B cell (primary cell): ENCODE measurements at regions of chr20 and their contacts with region 1.

Region 1: DNA sequence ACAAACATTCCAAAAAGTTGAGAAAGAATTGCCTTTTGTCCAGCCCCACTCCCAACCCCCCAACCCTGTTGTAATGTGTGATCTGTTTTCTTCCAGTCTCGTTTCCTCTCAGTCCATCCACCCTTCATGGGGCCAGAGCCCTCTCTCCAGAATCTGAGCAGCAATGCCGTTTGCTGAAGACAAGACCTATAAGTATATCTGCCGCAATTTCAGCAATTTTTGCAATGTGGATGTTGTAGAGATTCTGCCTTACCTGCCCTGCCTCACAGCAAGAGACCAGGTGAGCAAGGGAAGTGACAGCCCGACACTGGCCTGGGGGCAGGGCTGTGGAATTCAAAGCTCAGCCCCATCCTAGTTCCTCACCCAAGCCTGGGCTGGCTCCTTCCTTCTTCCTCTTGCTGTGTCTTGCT is 7.8 kb downstream of the MAVS start:
- DNase-seq: no peak
- ATAC-seq: no peak
- H3K4me3 ChIP-seq: no peak overlapping the region
- H3K4me3 Mint-ChIP-seq: no peak overlapping the region
- H3K27ac ChIP-seq: no peak overlapping the region
- H3K27ac Mint-ChIP-seq: peak overlapping the region; percentile 26
- H3K4me1 ChIP-seq: no peaks in the 10 kb centered on the region
- H3K4me1 Mint-ChIP-seq: peaks cover 6% of the 10 kb centered on the region
- H3K27me3 ChIP-seq: no peaks in the 10 kb centered on the region
- H3K27me3 Mint-ChIP-seq: no peaks in the 10 kb centered on the region
- CTCF ChIP-seq: no peak

Region 2: DNA sequence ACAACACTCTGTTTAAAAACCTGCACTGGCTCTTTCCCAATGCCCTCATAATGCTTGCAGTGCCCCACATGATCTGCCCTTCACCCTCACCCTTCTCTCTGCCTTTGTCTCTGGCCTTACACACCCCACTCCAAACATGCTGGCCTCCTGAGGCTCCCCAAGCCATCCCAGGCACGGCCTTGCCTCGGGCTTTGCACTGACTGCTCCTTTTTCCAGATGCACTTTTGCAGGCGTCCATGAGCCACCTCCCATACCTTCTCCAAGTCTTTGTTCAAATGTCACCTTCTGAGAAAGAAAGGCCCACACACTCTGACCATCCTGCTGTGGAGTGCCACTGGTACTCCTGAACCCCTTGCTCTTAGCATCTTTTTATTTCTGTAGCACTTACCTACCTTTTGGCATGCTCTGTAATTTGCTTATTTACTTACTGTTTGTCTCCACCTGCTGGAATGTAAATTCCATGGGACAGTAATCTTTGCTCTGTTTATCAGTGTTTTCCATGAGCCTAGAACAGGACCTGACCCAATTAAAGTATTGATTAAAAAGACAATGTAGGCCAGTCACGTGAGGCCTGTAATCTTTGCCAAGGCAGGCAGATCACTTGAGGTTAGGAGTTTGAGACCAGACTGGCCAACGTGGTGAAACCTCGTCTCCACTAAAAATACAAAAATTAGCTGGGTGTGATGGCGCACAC is 222.0 kb before region 1 on chr20:
- CTCF ChIA-PET with region 1: no interaction called
- POLR2A ChIA-PET with region 1: no interaction called
- intact Hi-C with region 1: no loop called
- DNase-seq: no peak
- ATAC-seq: no peak
- H3K4me3 ChIP-seq: no peak overlapping the region
- H3K4me3 Mint-ChIP-seq: no peak overlapping the region
- H3K27ac ChIP-seq: no peak overlapping the region
- H3K27ac Mint-ChIP-seq: no peak overlapping the region
- H3K4me1 ChIP-seq: no peaks in the 10 kb centered on the region
- H3K4me1 Mint-ChIP-seq: no peaks in the 10 kb centered on the region
- H3K27me3 ChIP-seq: no peaks in the 10 kb centered on the region
- H3K27me3 Mint-ChIP-seq: no peaks in the 10 kb centered on the region
- CTCF ChIP-seq: no peak

Region 3: DNA sequence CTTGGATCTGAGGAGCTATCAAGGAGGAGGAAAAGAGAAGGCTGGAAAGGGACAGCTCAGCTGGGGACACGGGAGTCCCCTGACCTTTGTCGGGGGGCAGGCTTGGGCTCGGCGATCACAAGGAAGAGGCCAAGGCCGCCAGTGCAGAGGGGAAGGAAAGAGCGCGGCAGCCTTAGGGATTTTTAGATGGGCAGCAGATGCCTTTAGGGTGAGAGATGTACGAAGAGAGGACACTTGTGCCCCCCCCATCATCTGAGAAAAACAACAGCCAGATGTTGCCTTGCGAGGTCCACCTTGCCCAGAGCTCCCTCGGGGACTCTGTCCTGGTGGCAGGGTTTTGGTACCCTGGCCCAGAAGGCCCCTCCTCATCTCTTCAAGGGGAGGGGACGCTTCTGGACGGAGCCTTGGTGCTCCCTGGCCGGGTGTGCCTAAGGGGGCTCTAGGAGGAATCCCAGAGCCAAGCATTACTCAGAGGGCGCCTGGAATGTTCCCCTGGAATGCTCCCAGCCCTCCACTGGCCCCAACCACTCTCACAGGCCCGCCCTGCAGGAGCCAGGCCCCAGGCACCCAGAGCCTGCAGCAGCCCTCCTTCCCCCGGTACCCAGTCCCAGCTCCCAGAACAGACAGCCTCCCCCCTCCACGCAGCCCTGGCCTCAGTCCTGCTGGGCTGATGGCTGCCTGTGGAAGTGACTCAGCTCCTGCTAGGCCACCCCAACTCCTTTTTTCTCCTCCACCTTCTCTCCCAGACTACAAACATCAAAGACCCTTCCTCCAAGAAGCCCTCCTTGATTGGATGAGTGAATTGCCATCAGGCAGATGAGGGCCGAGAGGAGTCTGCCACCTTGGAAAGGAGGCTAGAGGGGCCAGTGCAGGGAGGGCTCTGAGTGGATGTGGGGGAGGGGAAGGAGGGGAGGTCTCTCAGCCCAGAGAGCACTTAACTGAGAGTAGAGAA is 174.4 kb before region 1 on chr20:
- CTCF ChIA-PET with region 1: interaction called, 16 read pairs
- POLR2A ChIA-PET with region 1: no interaction called
- intact Hi-C with region 1: no loop called
- DNase-seq: no peak
- ATAC-seq: no peak
- H3K4me3 ChIP-seq: no peak overlapping the region
- H3K4me3 Mint-ChIP-seq: no peak overlapping the region
- H3K27ac ChIP-seq: no peak overlapping the region
- H3K27ac Mint-ChIP-seq: no peak overlapping the region
- H3K4me1 ChIP-seq: peaks cover 0 to 7% of the 10 kb centered on the region in 2 donors
- H3K4me1 Mint-ChIP-seq: peaks cover 4% of the 10 kb centered on the region
- H3K27me3 ChIP-seq: peaks cover 0 to 38% (median 6%) of the 10 kb centered on the region in 4 experiments
- H3K27me3 Mint-ChIP-seq: peaks cover 57% of the 10 kb centered on the region
- CTCF ChIP-seq: no peak

Region 4: DNA sequence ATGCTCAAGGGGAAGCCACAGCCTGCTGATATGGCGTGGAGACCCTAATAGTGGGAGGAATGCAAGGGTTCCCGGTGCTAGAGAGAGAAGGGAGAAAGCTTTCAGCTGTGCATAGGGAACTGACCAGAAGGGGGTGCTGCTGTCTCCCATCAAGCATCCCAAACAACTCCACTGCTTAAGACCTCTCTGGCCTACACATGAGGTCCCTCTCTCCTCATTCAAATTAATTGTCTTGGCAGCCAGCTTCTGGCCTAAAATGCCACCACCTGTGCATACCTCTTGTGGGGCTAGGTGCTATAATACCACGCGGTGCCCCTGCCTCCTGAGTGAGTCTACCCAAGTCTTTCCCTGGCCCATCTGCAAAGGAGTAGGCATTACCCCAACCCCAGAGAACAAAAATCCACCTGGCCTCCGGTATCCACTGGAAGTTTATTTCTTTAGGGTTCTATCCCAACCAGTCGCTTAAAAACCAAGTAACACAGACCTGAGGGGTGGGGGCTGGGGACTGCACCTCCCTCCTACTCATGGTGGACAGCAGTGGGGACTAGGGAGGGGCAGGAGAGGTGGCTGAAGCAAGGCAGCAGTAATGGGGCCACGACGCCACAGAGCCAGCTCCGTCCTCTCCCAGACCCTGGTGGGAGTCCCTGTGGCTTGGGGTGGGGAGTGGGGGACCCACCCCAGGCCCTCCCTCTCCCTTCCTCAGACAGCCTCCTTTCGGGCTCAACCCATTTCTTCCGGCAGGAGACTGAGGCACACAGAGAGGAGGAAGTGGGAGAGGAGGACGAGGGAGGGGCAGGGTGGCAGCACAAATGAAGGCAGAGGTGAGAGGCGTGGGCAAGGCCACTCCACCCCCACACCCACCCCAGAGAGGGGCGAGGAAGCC is 101.1 kb before region 1 on chr20:
- CTCF ChIA-PET with region 1: interaction called, 10 read pairs
- POLR2A ChIA-PET with region 1: interaction called, 4 read pairs
- intact Hi-C with region 1: loop called (anchors 1 kb)
- DNase-seq: peak; percentile 72
- ATAC-seq: peak; percentile 59
- H3K4me3 ChIP-seq: no peak overlapping the region
- H3K4me3 Mint-ChIP-seq: peak overlapping the region; percentile 37
- H3K27ac ChIP-seq: no peak overlapping the region
- H3K27ac Mint-ChIP-seq: peak overlapping the region; percentile 67
- H3K4me1 ChIP-seq: peaks cover 0 to 12% of the 10 kb centered on the region in 2 donors
- H3K4me1 Mint-ChIP-seq: peaks cover 7% of the 10 kb centered on the region
- H3K27me3 ChIP-seq: no peaks in the 10 kb centered on the region
- H3K27me3 Mint-ChIP-seq: no peaks in the 10 kb centered on the region
- CTCF ChIP-seq: peak; percentile 75

Region 5: GRCh38 chr20:3786665-3787323 is 67.7 kb before region 1 on chr20 and contains the start of gene CENPB:
- CTCF ChIA-PET with region 1: interaction called, 47 read pairs
- POLR2A ChIA-PET with region 1: no interaction called
- intact Hi-C with region 1: loop called (anchors 1 kb)
- DNase-seq: peak; percentile 91
- ATAC-seq: peak; percentile 96
- H3K4me3 ChIP-seq: peak within 1 kb of the TSS; percentile 46 to 62 (median 59)
- H3K4me3 Mint-ChIP-seq: peak within 1 kb of the TSS; percentile 89
- H3K27ac ChIP-seq: peak within 1 kb of the TSS; percentile 16 to 56
- H3K27ac Mint-ChIP-seq: peak within 1 kb of the TSS; percentile 88
- H3K4me1 ChIP-seq: peaks cover 8 to 18% of the 10 kb centered on the region in 2 donors
- H3K4me1 Mint-ChIP-seq: peaks cover 30% of the 10 kb centered on the region
- H3K27me3 ChIP-seq: no peaks in the 10 kb centered on the region
- H3K27me3 Mint-ChIP-seq: no peaks in the 10 kb centered on the region
- CTCF ChIP-seq: peak; percentile 88
- total RNA-seq, gene CENPB: 43.7 and 46.4 TPM in 2 replicates

Region 6: GRCh38 chr20:3795511-3796468 is 58.7 kb before region 1 on chr20 and contains the start of gene CDC25B:
- CTCF ChIA-PET with region 1: interaction called, 13 read pairs
- POLR2A ChIA-PET with region 1: no interaction called
- intact Hi-C with region 1: no loop called
- DNase-seq: peak; percentile 89
- ATAC-seq: peak; percentile 76
- H3K4me3 ChIP-seq: peak within 1 kb of the TSS; percentile 64 to 100 (median 90)
- H3K4me3 Mint-ChIP-seq: peak within 1 kb of the TSS; percentile 97
- H3K27ac ChIP-seq: peak within 1 kb of the TSS; percentile 93 to 97
- H3K27ac Mint-ChIP-seq: peak within 1 kb of the TSS; percentile 98
- H3K4me1 ChIP-seq: peaks cover 47 to 52% of the 10 kb centered on the region in 2 donors
- H3K4me1 Mint-ChIP-seq: peaks cover 49% of the 10 kb centered on the region
- H3K27me3 ChIP-seq: no peaks in the 10 kb centered on the region
- H3K27me3 Mint-ChIP-seq: no peaks in the 10 kb centered on the region
- CTCF ChIP-seq: peak; percentile 39
- total RNA-seq, gene CDC25B: 72.3 and 77.3 TPM in 2 replicates

Region 7: DNA sequence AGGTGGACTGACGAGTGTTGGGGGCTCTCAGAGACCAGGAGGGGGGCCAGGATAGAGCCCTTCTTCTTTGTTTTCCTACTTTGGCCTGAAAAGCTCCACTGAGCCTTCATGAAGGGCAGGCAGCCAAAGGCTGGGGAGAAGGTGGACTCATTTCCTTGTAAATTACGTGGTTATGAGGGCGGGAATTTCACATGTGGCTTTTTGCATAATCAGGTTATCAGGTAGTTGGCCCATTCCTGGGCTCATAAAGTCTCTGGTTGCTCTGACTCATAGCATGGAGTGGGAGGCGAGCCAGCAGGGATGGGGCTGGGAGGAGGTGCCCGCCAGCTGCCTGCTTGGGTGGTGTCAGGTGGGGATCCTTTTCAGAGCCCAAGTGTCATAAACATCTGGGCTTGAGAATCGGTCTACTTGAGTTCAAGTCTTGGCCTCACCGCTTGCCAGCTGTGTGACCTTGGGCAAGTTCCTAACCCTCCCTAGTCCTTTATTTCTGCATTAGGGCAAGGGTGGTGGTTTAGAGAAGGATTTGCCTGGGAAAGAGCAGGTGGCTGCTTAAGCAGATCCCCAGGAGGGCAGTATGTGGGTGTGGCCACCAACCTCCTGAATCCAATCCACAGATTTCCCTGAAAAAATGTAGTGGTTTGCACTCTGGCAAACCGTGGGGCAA is 187.4 kb after region 1 on chr20:
- CTCF ChIA-PET with region 1: no interaction called
- POLR2A ChIA-PET with region 1: no interaction called
- intact Hi-C with region 1: no loop called
- DNase-seq: no peak
- ATAC-seq: no peak
- H3K4me3 ChIP-seq: no peak overlapping the region
- H3K4me3 Mint-ChIP-seq: no peak overlapping the region
- H3K27ac ChIP-seq: no peak overlapping the region
- H3K27ac Mint-ChIP-seq: no peak overlapping the region
- H3K4me1 ChIP-seq: peaks cover 16 to 17% of the 10 kb centered on the region in 2 donors
- H3K4me1 Mint-ChIP-seq: peaks cover 10% of the 10 kb centered on the region
- H3K27me3 ChIP-seq: no peaks in the 10 kb centered on the region
- H3K27me3 Mint-ChIP-seq: peaks cover 20% of the 10 kb centered on the region
- CTCF ChIP-seq: no peak